ENCODE measurements at regions of chr5 and their contacts with region 1.

Region 1: DNA sequence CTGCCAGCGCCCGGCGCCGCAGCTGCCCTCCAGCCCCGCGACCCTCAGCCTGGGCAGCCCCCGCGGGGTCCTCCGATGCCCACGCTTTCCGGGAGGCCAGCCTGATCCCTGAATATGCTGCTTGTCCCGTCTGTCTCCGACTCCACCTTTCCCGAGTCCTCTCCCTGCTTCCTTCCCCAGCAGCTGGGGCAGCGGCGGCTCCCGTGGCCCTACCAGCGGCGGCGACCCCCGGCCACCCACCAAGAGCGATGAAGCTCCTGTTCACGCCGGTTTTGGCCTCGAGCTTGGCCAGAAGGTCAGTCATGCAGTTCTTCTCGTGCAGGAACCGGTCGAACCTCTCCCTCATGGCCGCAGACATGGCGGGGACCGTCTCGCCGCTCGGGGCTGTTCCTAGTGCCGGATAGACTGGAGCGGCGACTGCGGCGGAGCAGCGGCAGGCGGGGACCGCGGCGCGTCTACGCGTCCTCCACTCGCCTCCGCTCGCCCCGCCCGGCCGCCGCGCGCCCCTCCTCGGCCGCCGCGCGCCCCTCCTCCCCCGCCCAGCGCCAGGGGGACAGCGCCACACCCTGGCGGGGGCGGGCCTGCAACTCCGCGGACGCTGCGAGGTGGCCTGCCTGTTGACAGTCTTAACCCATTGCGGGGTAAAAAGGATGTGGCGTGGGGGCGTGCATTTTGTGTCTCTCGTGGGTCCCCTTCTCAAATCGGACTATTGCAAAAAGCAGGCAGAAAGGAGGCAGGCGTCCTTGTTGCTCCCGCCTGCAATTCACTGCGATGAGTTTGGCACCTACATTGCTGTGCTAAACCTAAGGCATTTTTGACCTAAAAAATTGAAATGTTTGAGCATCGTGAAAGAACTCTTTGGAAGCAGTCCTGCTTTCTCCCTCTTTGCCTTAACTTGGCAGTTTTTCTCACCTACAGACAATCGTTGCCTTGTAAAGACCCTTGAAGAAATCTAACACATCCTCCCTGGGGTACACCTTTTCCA is at the start of gene REEP5:
- DNase-seq: no peak
- H3K4me3 ChIP-seq: peak within 1 kb of the TSS; percentile 92
- CTCF ChIP-seq: peak; percentile 79

Region 2: GRCh38 chr5:112604732-112605630 is 317.1 kb before region 1 on chr5:
- CTCF ChIA-PET with region 1: no interaction called
- POLR2A ChIA-PET with region 1: no interaction called
- DNase-seq: no peak
- H3K4me3 ChIP-seq: no peak overlapping the region
- CTCF ChIP-seq: no peak

Region 3: DNA sequence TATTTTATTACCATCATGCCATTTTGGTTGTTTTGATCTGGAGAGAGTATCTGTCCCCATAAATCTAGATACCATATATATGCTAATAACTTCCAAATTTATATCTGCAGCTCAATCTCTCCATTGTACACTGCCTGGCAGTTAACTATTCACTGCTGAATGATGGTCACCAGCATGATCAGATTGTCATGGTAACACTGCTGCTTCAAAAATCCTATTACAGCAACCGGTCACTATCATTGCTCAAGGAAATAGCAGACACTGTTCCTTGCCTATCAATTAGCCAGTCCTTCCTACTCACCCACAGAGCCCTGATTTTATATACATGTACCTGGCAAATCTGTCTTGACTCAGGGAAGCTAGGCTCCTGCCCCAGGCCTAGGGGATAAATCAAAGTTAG is 11.6 kb before region 1 on chr5:
- CTCF ChIA-PET with region 1: interaction called, 17 read pairs
- POLR2A ChIA-PET with region 1: interaction called, 4 read pairs
- DNase-seq: no peak
- H3K4me3 ChIP-seq: no peak overlapping the region
- CTCF ChIP-seq: no peak

Region 4: GRCh38 chr5:112933651-112934365 is 11.7 kb after region 1 on chr5:
- CTCF ChIA-PET with region 1: interaction called, 10 read pairs
- POLR2A ChIA-PET with region 1: no interaction called
- DNase-seq: peak; percentile 26
- H3K4me3 ChIP-seq: no peak overlapping the region
- CTCF ChIP-seq: no peak

Measured in AG04449 (cell line).